ENCODE measurements at regions of chr10 and their contacts with region 1.

Region 1: GRCh38 chr10:129744134-129745111 is 219.7 kb downstream of the EBF3 start:
- DNase-seq: peak; percentile 35
- ATAC-seq: no peak

Region 2: DNA sequence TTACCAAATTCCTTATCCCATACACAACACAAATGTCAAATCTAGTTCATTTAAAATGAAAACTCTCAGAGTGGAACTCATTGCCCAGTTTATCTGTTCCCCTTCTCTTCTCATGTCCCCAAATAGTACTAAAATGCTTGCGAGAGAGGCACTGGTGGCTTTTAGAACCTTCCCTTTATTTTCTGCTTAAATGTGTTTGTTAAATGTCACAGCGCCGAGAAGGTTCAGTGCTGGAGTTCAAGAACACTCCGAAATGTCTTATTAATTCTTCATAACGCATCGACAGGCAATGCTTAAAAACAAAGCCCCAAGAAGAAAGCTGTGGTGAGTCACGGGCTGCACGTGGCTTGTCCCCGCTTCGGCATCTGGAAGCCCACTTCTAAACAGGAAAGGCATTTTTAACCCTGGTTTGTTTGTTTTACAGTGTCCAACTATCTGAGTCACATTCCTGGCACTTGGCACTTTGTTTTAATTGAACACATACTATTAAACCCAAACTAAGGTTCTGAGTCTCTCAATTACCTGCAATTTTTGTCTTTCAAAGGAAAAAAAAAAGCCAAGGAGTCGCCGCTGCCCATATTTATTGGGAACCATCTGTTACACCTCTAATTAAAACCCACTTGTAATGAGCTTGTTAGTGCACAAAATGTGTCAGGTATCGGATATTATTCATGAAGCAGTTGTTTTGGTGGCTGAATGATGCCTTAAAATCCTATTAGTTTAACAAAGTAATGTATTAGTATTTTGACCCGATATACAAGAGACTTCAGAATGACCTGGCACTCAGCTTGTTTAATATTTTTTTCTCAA is 327.3 kb before region 1 on chr10:
- intact Hi-C with region 1: no loop called
- DNase-seq: no peak
- ATAC-seq: no peak

Region 3: DNA sequence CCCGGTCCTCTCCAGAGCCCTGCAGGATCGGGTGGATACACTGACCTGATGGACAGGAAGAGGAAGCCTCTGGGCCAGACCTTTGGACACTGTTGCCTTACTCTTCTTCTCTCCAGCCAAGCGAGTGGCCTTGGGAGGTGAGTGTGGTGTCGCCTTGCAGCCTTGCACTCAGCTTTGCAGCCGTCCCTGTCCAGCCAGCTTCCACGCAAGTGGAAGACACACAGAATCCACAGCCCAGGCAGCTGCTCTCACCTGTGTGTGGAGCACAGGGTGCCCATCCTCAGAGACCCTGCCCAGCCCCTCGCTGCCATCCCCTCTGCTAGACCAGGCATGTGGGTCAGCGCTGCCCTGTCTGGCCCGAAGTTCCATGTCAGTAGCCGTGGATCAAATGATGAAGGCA is 19.4 kb before region 1 on chr10:
- intact Hi-C with region 1: loop called (anchors 2 kb)
- DNase-seq: no peak
- ATAC-seq: no peak

Measured in Right ventricle myocardium superior (tissue), 1 donor.